CD8-positive, alpha-beta T cell (primary cell): ENCODE measurements at regions of chr10 and their contacts with region 1.

Region 1: GRCh38 chr10:123043409-123043925 is 34.7 kb downstream of the ACADSB start:
- DNase-seq: peak in 8 of 9 experiments; percentile 11 to 66 (median 42)
- ATAC-seq: peak; percentile 75
- H3K4me3 ChIP-seq: no peak overlapping the region
- H3K4me3 Mint-ChIP-seq: no peak overlapping the region
- H3K27ac ChIP-seq: no peak overlapping the region
- H3K27ac Mint-ChIP-seq: no peak overlapping the region
- H3K4me1 ChIP-seq: no peaks in the 10 kb centered on the region
- H3K4me1 Mint-ChIP-seq: peaks cover 7% of the 10 kb centered on the region
- H3K27me3 ChIP-seq: no peaks in the 10 kb centered on the region
- H3K27me3 Mint-ChIP-seq: no peaks in the 10 kb centered on the region
- CTCF ChIP-seq: peak; percentile 68

Region 2: GRCh38 chr10:122990278-122990677 is 53.2 kb before region 1 on chr10:
- CTCF ChIA-PET with region 1: no interaction called
- POLR2A ChIA-PET with region 1: no interaction called
- intact Hi-C with region 1: no loop called
- DNase-seq: no peak
- ATAC-seq: no peak
- H3K4me3 ChIP-seq: no peak overlapping the region
- H3K4me3 Mint-ChIP-seq: no peak overlapping the region
- H3K27ac ChIP-seq: no peak overlapping the region
- H3K27ac Mint-ChIP-seq: peak overlapping the region; percentile 23
- H3K4me1 ChIP-seq: no peaks in the 10 kb centered on the region
- H3K4me1 Mint-ChIP-seq: peaks cover 1% of the 10 kb centered on the region
- H3K27me3 ChIP-seq: no peaks in the 10 kb centered on the region
- H3K27me3 Mint-ChIP-seq: no peaks in the 10 kb centered on the region
- CTCF ChIP-seq: no peak

Region 3: DNA sequence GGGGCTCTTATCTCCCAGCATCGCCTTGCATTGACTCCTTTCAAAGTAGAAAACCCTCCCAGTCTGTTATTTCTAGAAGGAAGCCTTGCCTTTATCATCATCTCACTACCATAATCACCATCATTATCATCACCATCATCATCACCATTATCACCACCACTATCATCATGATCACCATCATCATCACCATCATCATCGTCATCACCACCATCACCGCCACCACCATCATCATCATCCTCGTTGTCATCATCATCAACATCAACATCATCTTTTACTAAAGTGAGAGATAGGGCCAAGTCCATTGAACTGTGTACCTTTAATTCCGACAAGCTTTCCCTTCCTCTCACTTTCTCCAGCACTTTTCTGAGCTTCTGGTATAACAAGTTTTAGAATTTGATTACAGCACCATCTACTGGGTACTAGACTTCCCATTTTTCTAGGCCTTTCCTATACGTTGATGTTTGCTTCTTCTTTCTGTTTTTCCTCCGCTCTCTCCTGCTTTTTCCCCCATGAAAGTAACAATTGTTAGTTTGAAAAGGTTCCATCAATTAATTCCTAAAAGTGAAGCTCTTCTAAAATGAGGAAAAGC is 337.1 kb after region 1 on chr10:
- CTCF ChIA-PET with region 1: interaction called, 6 read pairs
- POLR2A ChIA-PET with region 1: no interaction called
- intact Hi-C with region 1: loop called in 1 of 2 experiments (anchors 1 kb)
- DNase-seq: peak in 2 of 9 experiments; percentile 11 to 20
- ATAC-seq: no peak
- H3K4me3 ChIP-seq: no peak overlapping the region
- H3K4me3 Mint-ChIP-seq: no peak overlapping the region
- H3K27ac ChIP-seq: no peak overlapping the region
- H3K27ac Mint-ChIP-seq: no peak overlapping the region
- H3K4me1 ChIP-seq: no peaks in the 10 kb centered on the region
- H3K4me1 Mint-ChIP-seq: no peaks in the 10 kb centered on the region
- H3K27me3 ChIP-seq: no peaks in the 10 kb centered on the region
- H3K27me3 Mint-ChIP-seq: peaks cover 13% of the 10 kb centered on the region
- CTCF ChIP-seq: peak; percentile 42

Region 4: GRCh38 chr10:123967396-123968243 is 924.2 kb after region 1 on chr10:
- CTCF ChIA-PET with region 1: no interaction called
- POLR2A ChIA-PET with region 1: no interaction called
- intact Hi-C with region 1: loop called in 1 of 2 experiments (anchors 5 kb)
- DNase-seq: peak in 6 of 9 experiments; percentile 11 to 58 (median 42)
- ATAC-seq: no peak
- H3K4me3 ChIP-seq: no peak overlapping the region
- H3K4me3 Mint-ChIP-seq: no peak overlapping the region
- H3K27ac ChIP-seq: no peak overlapping the region
- H3K27ac Mint-ChIP-seq: no peak overlapping the region
- H3K4me1 ChIP-seq: no peaks in the 10 kb centered on the region
- H3K4me1 Mint-ChIP-seq: peaks cover 2% of the 10 kb centered on the region
- H3K27me3 ChIP-seq: peaks cover 12 to 21% of the 10 kb centered on the region in 2 experiments
- H3K27me3 Mint-ChIP-seq: peaks cover 67% of the 10 kb centered on the region
- CTCF ChIP-seq: peak; percentile 24